ENCODE measurements at regions of chr1 and their contacts with region 1.

Region 1: GRCh38 chr1:87953732-87954344 is 625.2 kb downstream of the LMO4 start:
- DNase-seq: peak; percentile 55
- ATAC-seq: peak; percentile 85
- H3K4me3 ChIP-seq: no peak overlapping the region
- H3K27ac ChIP-seq: no peak overlapping the region
- H3K4me1 ChIP-seq: no peaks in the 10 kb centered on the region
- H3K27me3 ChIP-seq: 0 out of 5 replicates have a peak, but pooled peaks cover 0 to 4% of the 10 kb centered on the region in 2 experiments
- CTCF ChIP-seq: peak; percentile 77
- EP300 ChIP-seq: no peak
- POLR2A ChIP-seq: no peak
- RAD21 ChIP-seq: peak; percentile 78

Region 2: DNA sequence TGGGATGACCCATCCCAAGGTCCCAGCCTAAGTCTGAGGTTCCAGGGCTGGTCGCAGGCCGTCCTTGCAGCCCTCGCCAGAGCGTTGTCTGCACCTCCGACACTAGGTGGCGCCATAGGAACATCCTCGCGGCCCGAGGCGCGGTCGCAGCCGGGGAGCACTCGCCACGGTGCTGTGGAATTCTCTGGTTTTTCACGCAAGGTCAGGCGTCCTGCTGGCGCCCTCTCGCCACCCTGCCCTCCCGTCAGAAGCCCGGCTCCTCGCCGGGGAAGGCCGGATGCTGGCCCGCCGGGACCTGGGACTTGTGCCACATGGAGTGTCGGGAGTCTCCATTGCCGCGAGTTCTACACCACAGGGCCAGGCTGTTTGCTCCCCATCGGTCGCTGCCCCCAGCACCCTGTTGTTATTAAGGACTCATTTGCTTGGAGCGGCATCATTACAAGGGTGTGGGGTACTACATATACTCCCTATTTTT is 822.0 kb before region 1 on chr1:
- CTCF ChIA-PET with region 1: no interaction called
- POLR2A ChIA-PET with region 1: no interaction called
- in situ Hi-C with region 1: no loop called
- intact Hi-C with region 1: loop called (anchors 5 kb)
- DNase-seq: peak; percentile 47
- ATAC-seq: peak; percentile 97
- H3K4me3 ChIP-seq: peak overlapping the region; percentile 41 to 70 (median 42); a peak in 5 of 6 replicates
- H3K27ac ChIP-seq: no peak overlapping the region
- H3K4me1 ChIP-seq: no peaks in the 10 kb centered on the region
- H3K27me3 ChIP-seq: peaks cover 3 to 33% of the 10 kb centered on the region in 2 experiments; a peak in 3 of 5 replicates
- CTCF ChIP-seq: peak; percentile 98
- EP300 ChIP-seq: no peak
- POLR2A ChIP-seq: no peak
- RAD21 ChIP-seq: peak; percentile 94

Region 3: GRCh38 chr1:87292684-87293493 is 660.9 kb before region 1 on chr1:
- CTCF ChIA-PET with region 1: interaction called, 8 read pairs
- POLR2A ChIA-PET with region 1: no interaction called
- in situ Hi-C with region 1: no loop called
- intact Hi-C with region 1: loop called (anchors 1 kb)
- DNase-seq: peak; percentile 54
- ATAC-seq: peak; percentile 80
- H3K4me3 ChIP-seq: no peak overlapping the region
- H3K27ac ChIP-seq: no peak overlapping the region
- H3K4me1 ChIP-seq: no peaks in the 10 kb centered on the region
- H3K27me3 ChIP-seq: no peaks in the 10 kb centered on the region; a peak in 1 of 5 replicates
- CTCF ChIP-seq: peak; percentile 75
- EP300 ChIP-seq: no peak
- POLR2A ChIP-seq: no peak
- RAD21 ChIP-seq: peak; percentile 46; the same call in 1 of the 2 replicates

Region 4: GRCh38 chr1:87328272-87329050 is 625.4 kb before region 1 on chr1 and contains the start of gene LMO4:
- CTCF ChIA-PET with region 1: no interaction called
- POLR2A ChIA-PET with region 1: no interaction called
- in situ Hi-C with region 1: loop called (anchors 25 kb)
- intact Hi-C with region 1: loop called (anchors 1 kb)
- DNase-seq: peak; percentile 93
- ATAC-seq: peak; percentile 85
- H3K4me3 ChIP-seq: peak within 1 kb of the TSS; percentile 80 to 96 (median 87)
- H3K27ac ChIP-seq: peak within 1 kb of the TSS; percentile 87
- H3K4me1 ChIP-seq: peaks cover 28% of the 10 kb centered on the region
- H3K27me3 ChIP-seq: peaks cover 0 to 6% of the 10 kb centered on the region in 2 experiments; a peak in 2 of 5 replicates
- CTCF ChIP-seq: no peak
- EP300 ChIP-seq: no peak
- POLR2A ChIP-seq: peak; percentile 59 to 84
- RAD21 ChIP-seq: peak; percentile 23; the same call in 1 of the 2 replicates
- total RNA-seq, gene LMO4: 18.2 and 19.3 TPM in 2 replicates

Region 5: DNA sequence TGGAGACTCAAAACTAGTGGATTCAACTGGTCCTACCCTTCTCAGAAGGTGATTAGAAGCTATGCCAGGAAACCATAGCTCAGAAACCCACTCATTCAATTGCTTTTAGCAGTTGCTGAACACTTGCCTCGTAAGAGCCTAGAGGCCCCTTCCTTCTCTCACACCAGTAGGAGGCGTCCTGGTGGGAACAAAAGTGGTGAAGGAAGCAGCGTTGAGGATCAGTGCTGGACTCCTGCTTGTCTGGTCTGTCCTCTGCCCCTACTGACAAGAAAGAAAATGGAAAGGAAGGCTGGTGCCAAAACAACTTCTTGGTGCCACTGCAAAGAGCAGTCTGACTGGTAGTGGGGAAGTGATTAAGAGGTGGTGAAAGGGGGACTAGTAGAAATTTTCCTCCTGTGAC is 355.4 kb before region 1 on chr1:
- CTCF ChIA-PET with region 1: interaction called, 4 read pairs
- POLR2A ChIA-PET with region 1: no interaction called
- in situ Hi-C with region 1: no loop called
- intact Hi-C with region 1: loop called (anchors 5 kb)
- DNase-seq: peak; percentile 15
- ATAC-seq: peak; percentile 93
- H3K4me3 ChIP-seq: no peak overlapping the region
- H3K27ac ChIP-seq: no peak overlapping the region
- H3K4me1 ChIP-seq: no peaks in the 10 kb centered on the region
- H3K27me3 ChIP-seq: no peaks in the 10 kb centered on the region
- CTCF ChIP-seq: peak; percentile 51
- EP300 ChIP-seq: no peak
- POLR2A ChIP-seq: no peak
- RAD21 ChIP-seq: no peak

Region 6: GRCh38 chr1:87684194-87684593 is 269.6 kb before region 1 on chr1:
- CTCF ChIA-PET with region 1: no interaction called
- POLR2A ChIA-PET with region 1: no interaction called
- in situ Hi-C with region 1: no loop called
- intact Hi-C with region 1: loop called (anchors 5 kb)
- DNase-seq: no peak
- ATAC-seq: peak; percentile 75
- H3K4me3 ChIP-seq: peak overlapping the region; percentile 48 to 65 (median 56); a peak in 5 of 6 replicates
- H3K27ac ChIP-seq: no peak overlapping the region
- H3K4me1 ChIP-seq: peaks cover 7% of the 10 kb centered on the region
- H3K27me3 ChIP-seq: no peaks in the 10 kb centered on the region; a peak in 1 of 5 replicates
- CTCF ChIP-seq: no peak
- EP300 ChIP-seq: no peak
- POLR2A ChIP-seq: no peak
- RAD21 ChIP-seq: no peak

Region 7: DNA sequence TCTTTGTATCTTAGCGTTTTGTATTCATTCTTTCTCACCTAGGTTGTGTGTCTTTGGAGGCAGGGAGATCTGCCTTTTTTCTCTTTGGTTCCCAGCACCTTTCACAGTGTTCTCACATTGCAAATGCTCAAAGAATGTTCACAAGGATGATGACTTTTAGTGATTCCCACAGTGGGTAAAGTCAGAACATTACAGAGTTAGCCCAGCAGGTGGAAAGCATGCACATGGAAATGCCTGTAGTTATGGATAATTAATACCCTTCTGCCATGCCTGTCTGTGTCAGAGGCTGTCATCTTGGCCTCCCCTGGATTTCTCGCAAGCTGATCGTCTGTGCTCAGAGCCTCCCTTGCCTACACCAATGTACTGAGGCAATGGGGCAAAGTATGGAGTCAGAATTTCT is 166.3 kb before region 1 on chr1:
- CTCF ChIA-PET with region 1: interaction called, 6 read pairs
- POLR2A ChIA-PET with region 1: no interaction called
- in situ Hi-C with region 1: no loop called
- intact Hi-C with region 1: loop called (anchors 2 kb)
- DNase-seq: peak; percentile 69
- ATAC-seq: peak; percentile 89
- H3K4me3 ChIP-seq: peak overlapping the region in 2 of 3 experiments; percentile 8 to 11; a peak in 1 of 6 replicates
- H3K27ac ChIP-seq: peak overlapping the region; percentile 48
- H3K4me1 ChIP-seq: peaks cover 42% of the 10 kb centered on the region
- H3K27me3 ChIP-seq: no peaks in the 10 kb centered on the region
- CTCF ChIP-seq: peak; percentile 49
- EP300 ChIP-seq: no peak
- POLR2A ChIP-seq: no peak
- RAD21 ChIP-seq: no peak; the same call in 1 of the 2 replicates